Activated T-helper 1 cell treated with anti-CD3 and anti-CD28 coated beads, Interleukin-12 subunit alpha, Interleukin-12 subunit beta, Interleukin-2, Interleukin-4 antibody, amounts not matched to agents 30 ng/mL and 10 ng/mL and 1 ng/mL, durations not matched to agents 14 hours and 24 hours and 36 hours (primary cell): ENCODE measurements at regions of chr12 and their contacts with region 1.

Region 1: DNA sequence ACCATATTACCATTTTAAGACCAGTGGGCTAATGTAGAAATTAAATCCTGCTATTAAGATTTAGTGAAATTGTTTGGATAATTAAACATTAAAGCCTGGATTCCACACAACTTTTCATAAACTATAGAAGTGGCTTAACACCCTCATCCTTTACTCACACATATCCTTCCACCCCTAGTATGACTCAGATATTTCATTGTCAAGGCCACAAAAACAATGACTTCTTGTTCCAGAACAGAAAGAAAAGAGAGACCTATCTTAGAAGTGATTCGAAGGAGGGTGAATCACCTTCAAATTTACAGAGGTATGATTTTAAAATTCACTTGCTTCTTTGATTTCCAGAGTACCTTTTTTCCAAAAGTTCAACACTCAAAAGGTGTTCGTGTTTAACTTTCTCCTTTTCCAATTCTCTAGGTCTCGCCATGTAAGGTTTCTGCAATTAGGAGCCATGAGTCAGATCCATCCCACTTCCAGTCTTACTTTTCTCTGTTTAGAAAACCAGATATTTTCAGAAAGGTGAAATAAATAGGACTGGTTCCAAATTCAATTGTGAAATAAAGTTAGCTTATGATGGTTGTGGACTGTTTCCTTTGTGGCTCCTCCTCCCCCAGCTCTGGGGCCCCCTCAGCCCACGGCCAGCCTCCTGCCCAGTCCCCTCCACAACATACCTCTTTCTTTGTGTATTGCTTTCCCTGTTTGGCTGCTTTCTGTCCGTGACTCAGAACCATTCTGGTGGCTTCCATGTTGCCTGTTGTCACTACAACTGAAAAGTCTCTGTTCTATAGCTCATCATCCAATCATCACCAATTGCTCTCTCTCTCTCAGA is 24.6 kb upstream of the MGP start:
- DNase-seq: no peak
- H3K4me3 Mint-ChIP-seq: peak overlapping the region; percentile 56
- H3K27ac Mint-ChIP-seq: peak overlapping the region; percentile 97
- H3K4me1 Mint-ChIP-seq: peaks cover 31% of the 10 kb centered on the region
- H3K27me3 Mint-ChIP-seq: no peaks in the 10 kb centered on the region

Region 2: GRCh38 chr12:14193639-14194038 is 716.7 kb before region 1 on chr12:
- intact Hi-C with region 1: no loop called
- DNase-seq: no peak
- H3K4me3 Mint-ChIP-seq: no peak overlapping the region
- H3K27ac Mint-ChIP-seq: no peak overlapping the region
- H3K4me1 Mint-ChIP-seq: no peaks in the 10 kb centered on the region
- H3K27me3 Mint-ChIP-seq: peaks cover 2% of the 10 kb centered on the region

Region 3: GRCh38 chr12:14678547-14679150 is 231.7 kb before region 1 on chr12:
- intact Hi-C with region 1: no loop called
- DNase-seq: no peak
- H3K4me3 Mint-ChIP-seq: no peak overlapping the region
- H3K27ac Mint-ChIP-seq: no peak overlapping the region
- H3K4me1 Mint-ChIP-seq: peaks cover 6% of the 10 kb centered on the region
- H3K27me3 Mint-ChIP-seq: peaks cover 12% of the 10 kb centered on the region

Region 4: GRCh38 chr12:14774906-14775762 is 135.2 kb before region 1 on chr12:
- intact Hi-C with region 1: loop called (anchors 1 kb)
- DNase-seq: peak; percentile 36
- H3K4me3 Mint-ChIP-seq: peak overlapping the region; percentile 97
- H3K27ac Mint-ChIP-seq: peak overlapping the region; percentile 98
- H3K4me1 Mint-ChIP-seq: peaks cover 55% of the 10 kb centered on the region
- H3K27me3 Mint-ChIP-seq: no peaks in the 10 kb centered on the region

Region 5: DNA sequence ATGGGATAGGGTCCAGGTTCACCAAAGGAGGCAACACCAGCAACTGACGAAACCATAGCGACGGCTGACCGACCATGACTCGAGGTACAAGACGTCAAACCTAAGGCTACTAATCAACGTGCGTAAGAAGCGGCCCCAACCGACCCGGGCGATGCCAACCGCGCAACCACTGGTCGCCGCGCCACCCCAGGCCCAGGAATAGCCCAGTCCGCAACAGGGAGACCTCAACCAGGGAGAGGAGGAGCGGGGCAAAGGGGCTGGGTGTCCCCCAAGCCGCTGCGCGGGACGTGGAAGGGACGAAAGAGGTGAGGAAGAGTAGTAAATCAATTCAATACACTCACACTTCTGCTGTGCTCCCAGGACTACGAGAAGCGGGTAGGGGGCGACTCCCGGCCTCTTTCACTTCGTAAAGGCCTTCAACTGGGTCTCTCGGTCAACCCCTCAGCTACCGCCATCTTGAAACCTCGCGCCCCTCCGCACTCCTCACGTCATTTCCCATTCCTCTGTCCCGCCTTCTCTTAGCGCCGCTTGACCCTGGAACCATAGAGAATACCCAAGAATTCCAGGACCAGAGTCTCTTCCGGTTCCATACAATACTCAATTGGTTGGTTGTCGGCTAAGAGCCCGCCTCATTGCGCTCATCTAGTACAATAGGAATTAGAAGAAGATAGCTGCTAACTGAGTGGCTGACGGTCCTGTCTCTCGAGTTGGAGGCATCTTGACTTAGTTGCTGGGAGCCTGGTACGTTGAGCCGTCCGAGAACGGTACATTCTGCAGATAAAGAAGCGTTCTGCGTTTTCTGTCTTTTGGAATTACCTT is 107.1 kb before region 1 on chr12 and contains the starts of genes C12orf60 and WBP11:
- intact Hi-C with region 1: loop called (anchors 1 kb)
- DNase-seq: peak; percentile 84
- H3K4me3 Mint-ChIP-seq: no peak within 1 kb of the TSS
- H3K27ac Mint-ChIP-seq: no peak within 1 kb of the TSS
- H3K4me1 Mint-ChIP-seq: peaks cover 22% of the 10 kb centered on the region
- H3K27me3 Mint-ChIP-seq: no peaks in the 10 kb centered on the region
- total RNA-seq, gene C12orf60: 2.1 and 2.2 TPM in 2 replicates
- total RNA-seq, gene WBP11: 128 and 142 TPM in 2 replicates

Region 6: DNA sequence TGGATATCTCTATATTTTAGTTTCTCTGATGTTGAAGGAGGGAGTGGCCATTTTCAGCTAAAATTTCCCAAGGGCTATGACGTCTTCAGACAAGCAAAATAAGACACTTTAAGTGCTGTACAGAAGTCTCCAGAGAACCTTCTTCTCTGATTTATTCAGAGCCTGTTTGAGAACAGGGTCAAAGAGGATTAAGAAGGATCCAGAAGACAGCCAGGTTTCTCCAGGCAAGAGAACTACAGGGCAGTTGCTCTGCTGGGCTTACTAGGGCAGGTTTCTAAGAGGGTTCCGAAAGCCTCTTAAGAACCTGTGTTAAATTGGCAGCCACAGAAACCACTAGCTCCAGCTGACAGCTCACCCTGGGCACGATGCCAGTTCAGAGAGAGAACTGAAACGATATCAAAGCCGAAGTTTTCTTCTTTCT is 25.8 kb before region 1 on chr12:
- intact Hi-C with region 1: loop called (anchors 2 kb)
- DNase-seq: peak; percentile 9
- H3K4me3 Mint-ChIP-seq: no peak overlapping the region
- H3K27ac Mint-ChIP-seq: no peak overlapping the region
- H3K4me1 Mint-ChIP-seq: peaks cover 23% of the 10 kb centered on the region
- H3K27me3 Mint-ChIP-seq: peaks cover 20% of the 10 kb centered on the region

Region 7: GRCh38 chr12:15056218-15056617 is 145.9 kb after region 1 on chr12:
- intact Hi-C with region 1: no loop called
- DNase-seq: no peak
- H3K4me3 Mint-ChIP-seq: no peak overlapping the region
- H3K27ac Mint-ChIP-seq: no peak overlapping the region
- H3K4me1 Mint-ChIP-seq: no peaks in the 10 kb centered on the region
- H3K27me3 Mint-ChIP-seq: peaks cover 10% of the 10 kb centered on the region

Region 8: GRCh38 chr12:15131431-15131830 is 221.1 kb after region 1 on chr12:
- intact Hi-C with region 1: no loop called
- DNase-seq: no peak
- H3K4me3 Mint-ChIP-seq: no peak overlapping the region
- H3K27ac Mint-ChIP-seq: no peak overlapping the region
- H3K4me1 Mint-ChIP-seq: no peaks in the 10 kb centered on the region
- H3K27me3 Mint-ChIP-seq: peaks cover 7% of the 10 kb centered on the region